Activated CD4-positive, alpha-beta T cell treated with anti-CD3 and anti-CD28 coated beads, Interleukin-2, amount 10 ng/mL, durations not matched to agents 24 days and 14 days (primary cell): ENCODE measurements at regions of chrX and their contacts with region 1.

Region 1: DNA sequence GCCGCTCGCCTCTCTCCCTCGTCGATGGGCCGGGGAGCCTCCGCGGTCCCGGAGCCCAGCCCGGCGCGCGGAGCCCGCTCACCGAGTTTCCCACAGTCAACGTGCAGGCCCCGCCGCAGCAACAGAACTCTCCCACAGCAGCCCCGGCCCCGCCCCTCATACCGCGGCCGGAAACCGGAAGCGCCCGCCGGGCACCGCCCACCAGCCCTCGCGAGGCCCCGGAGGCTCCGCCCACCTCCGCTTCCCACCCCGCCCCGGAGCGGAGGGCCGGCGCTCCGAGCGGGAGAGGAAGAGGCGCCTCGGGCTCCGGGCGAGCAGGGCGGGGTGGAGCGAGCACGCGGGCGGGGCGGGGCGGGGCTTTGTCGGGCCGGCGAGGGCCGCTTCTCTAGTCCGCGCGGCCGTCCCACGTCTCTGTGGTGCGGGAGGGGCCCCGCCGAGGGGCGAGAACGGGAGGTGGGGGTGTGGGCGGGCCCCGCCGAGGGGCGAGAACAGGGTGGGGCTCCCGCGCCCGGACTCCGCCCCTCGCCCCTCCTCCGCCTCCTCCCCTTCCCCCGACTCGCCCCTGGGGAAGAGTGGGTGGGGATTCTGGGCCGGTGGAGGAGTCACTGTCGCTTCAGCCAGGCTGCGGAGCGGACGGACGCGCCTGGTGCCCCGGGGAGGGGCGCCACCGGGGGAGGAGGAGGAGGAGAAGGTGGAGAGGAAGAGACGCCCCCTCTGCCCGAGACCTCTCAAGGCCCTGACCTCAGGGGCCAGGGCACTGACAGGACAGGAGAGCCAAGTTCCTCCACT is at the starts of genes ABCD1 and BCAP31:
- DNase-seq: peak; percentile 97
- H3K4me3 Mint-ChIP-seq: peak within 1 kb of the TSS; percentile 90
- H3K27ac Mint-ChIP-seq: peak within 1 kb of the TSS; percentile 89
- H3K4me1 Mint-ChIP-seq: peaks cover 14% of the 10 kb centered on the region
- H3K27me3 Mint-ChIP-seq: no peaks in the 10 kb centered on the region
- total RNA-seq, gene ABCD1: 6.6 and 7.7 TPM in 2 replicates
- total RNA-seq, gene BCAP31: 154 and 157 TPM in 2 replicates

Region 2: DNA sequence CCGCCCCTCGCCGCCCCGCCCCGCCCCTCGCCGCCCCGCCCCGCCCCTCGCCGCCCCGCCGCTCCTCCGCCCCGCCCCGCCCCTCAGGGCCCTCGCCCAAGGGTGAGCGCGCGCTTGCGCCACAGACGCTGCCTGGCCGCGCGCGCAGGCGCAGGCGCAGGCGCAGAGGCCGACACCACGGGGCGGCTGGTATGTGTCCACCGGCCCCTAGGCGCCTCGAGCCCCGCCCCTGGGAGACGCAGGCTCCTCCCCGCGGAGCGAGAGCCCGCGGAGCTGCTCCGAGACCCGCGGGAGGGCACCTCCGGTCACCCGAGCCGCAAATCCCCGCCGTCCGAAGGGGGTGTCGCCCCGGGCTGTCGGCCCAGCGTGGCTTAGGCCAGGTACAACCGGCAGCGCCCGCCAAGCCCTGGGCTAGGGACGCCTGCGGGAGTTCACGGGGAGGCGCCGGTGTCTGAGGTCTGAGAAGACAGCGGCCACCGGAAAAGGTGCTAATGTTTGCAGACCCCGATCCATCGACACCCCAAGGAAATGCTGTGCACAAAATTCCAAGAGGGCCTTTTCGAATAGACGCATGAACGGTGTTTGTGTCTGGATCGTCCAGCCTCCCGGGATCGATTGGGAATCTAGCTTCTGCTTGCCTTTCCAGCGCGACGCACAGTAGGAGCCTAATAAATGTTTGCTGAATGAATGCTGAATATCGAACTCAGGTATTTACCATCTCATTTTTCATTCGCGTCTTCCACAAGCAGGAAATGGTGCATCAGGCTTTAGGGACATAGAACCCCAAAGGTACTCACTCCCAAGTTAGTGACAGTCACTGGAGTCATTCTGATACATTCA is 125.0 kb before region 1 on chrX:
- intact Hi-C with region 1: loop called (anchors 2 kb)
- DNase-seq: peak; percentile 97
- H3K4me3 Mint-ChIP-seq: peak overlapping the region; percentile 87
- H3K27ac Mint-ChIP-seq: peak overlapping the region; percentile 73
- H3K4me1 Mint-ChIP-seq: peaks cover 25% of the 10 kb centered on the region
- H3K27me3 Mint-ChIP-seq: no peaks in the 10 kb centered on the region

Region 3: GRCh38 chrX:153687121-153688039 is 37.1 kb before region 1 on chrX and contains the start of gene SLC6A8:
- intact Hi-C with region 1: loop called (anchors 5 kb)
- DNase-seq: peak; percentile 78
- H3K4me3 Mint-ChIP-seq: peak within 1 kb of the TSS; percentile 78
- H3K27ac Mint-ChIP-seq: no peak within 1 kb of the TSS
- H3K4me1 Mint-ChIP-seq: no peaks in the 10 kb centered on the region
- H3K27me3 Mint-ChIP-seq: peaks cover 19% of the 10 kb centered on the region
- total RNA-seq, gene SLC6A8: 3.5 TPM in 2 replicates

Region 4: DNA sequence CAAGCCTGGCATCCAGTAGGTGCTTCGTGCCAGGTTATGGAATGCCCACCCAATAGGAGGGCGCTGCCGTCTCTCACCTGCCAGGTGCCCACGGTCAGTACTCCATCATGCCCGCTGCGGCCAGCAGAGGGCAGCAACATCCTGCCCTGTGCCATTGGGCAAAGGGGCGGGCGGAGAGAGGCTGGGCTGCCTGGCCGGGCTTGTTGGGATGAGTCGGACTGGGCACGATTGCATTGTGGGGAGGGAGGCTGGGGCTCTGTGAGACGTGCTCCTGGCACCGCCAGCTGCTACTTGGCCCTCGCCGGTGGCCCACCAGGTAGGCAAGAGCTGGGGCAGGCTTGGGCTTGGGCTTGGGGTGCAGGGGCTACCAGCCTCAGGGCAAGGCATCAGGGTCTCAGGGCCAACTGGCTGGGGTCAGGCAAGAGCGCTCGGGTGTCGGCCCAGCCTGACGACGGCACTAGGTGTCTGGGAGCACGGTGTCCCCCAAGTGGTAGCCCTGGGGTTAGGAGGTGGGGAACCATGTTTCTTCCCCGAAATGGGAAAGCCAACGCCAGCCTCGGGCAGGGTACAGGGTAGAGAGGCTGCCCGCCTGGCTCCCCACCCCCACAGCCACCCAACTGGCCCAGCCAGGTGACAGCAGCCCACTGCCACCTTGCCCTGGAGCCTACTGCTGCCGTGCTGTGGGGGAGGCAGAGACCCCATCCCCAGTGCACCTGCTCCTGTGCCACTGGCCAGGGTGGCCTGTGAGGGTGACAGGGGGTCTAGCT is 39.7 kb after region 1 on chrX and contains the start of gene PLXNB3:
- intact Hi-C with region 1: no loop called
- DNase-seq: peak; percentile 92
- H3K4me3 Mint-ChIP-seq: no peak within 1 kb of the TSS
- H3K27ac Mint-ChIP-seq: no peak within 1 kb of the TSS
- H3K4me1 Mint-ChIP-seq: peaks cover 6% of the 10 kb centered on the region
- H3K27me3 Mint-ChIP-seq: no peaks in the 10 kb centered on the region
- total RNA-seq, gene PLXNB3: 0.43 and 0.49 TPM in 2 replicates